ENCODE measurements at regions of chr6 and their contacts with region 1.

Region 1: DNA sequence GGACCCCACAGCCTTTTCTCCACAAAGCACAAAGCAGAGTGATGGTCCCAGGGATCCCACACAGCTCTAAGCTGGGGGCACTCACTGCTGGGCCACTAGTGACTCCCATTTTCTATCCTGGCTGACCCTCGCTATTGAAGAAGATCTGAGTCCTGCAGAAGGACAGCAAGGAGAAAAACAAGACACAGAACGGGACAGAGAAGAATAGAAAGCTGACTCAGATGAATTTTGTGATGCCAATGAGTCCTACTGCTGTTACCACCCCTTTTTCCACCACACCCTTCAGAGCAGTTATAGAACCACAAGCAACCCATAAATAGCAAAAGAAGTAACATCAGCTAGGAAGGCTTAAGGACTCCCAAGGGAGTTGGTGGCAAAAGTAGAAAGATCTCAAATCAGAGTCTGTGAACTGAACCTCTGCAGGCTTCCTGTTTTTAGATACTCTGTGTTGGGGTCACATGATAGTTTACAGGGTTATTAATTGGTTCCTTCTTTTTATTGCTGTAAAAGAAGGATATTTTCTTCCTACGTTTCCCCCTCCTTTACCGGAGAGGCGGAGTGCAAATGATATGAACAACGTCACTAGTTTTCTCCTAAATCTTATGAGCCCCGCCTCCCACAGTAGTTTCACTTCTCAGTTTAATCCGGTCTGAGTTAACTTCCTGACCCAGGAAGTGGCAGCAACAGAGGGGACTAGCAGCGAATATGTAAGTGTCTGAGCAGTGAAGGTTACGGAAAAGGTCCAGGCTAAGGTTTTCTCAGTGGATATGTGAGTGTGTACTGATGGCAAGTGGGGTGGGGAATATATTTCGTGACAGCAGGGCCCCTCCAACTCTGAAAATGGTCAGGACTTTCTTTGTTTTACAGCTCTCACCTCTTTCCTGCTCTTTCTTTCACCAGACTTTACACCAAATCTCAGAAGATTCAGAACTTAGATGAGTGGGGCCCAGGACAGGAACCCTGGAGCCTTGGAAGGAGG is at the start of gene TRIM38:
- DNase-seq: peak; percentile 50 to 95 (median 77)
- ATAC-seq: peak; percentile 86
- H3K4me3 ChIP-seq: peak within 1 kb of the TSS; percentile 76 to 86
- H3K4me3 Mint-ChIP-seq: peak within 1 kb of the TSS; percentile 95
- H3K27ac ChIP-seq: peak within 1 kb of the TSS; percentile 91 to 95
- H3K27ac Mint-ChIP-seq: peak within 1 kb of the TSS; percentile 98
- H3K4me1 ChIP-seq: peaks cover 64% of the 10 kb centered on the region
- H3K4me1 Mint-ChIP-seq: peaks cover 81% of the 10 kb centered on the region
- H3K27me3 ChIP-seq: no peaks in the 10 kb centered on the region
- H3K27me3 Mint-ChIP-seq: no peaks in the 10 kb centered on the region
- CTCF ChIP-seq: no peak
- total RNA-seq, gene TRIM38: 13.2 to 13.6 TPM

Region 2: DNA sequence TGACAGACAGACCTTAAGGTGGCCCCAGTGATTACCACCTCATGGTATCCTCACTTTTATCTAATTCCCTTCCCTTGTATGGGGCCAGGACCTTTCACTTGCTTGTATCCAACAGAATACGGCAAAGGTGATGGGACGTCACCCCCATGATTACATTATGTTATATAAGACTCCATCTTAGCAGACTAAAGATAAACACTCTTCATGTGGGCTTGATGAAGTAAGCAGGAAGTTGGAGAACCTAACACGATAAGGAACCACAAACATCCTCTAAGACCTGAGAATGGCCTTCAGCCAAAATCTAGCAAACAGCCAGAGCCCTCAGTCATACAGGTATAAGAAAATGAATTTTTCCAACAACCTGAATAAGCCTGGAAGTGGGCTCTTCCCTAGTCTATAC is 96.4 kb before region 1 on chr6:
- CTCF ChIA-PET with region 1: no interaction called
- POLR2A ChIA-PET with region 1: no interaction called
- intact Hi-C with region 1: loop called in 1 of 2 experiments (anchors 5 kb)
- DNase-seq: peak in 7 of 9 experiments; percentile 5 to 84 (median 47)
- ATAC-seq: peak; percentile 91
- H3K4me3 ChIP-seq: no peak overlapping the region
- H3K4me3 Mint-ChIP-seq: peak overlapping the region; percentile 40
- H3K27ac ChIP-seq: peak overlapping the region in 1 of 2 experiments; percentile 38
- H3K27ac Mint-ChIP-seq: peak overlapping the region; percentile 88
- H3K4me1 ChIP-seq: peaks cover 14% of the 10 kb centered on the region
- H3K4me1 Mint-ChIP-seq: peaks cover 24% of the 10 kb centered on the region
- H3K27me3 ChIP-seq: no peaks in the 10 kb centered on the region
- H3K27me3 Mint-ChIP-seq: no peaks in the 10 kb centered on the region
- CTCF ChIP-seq: no peak

Region 3: GRCh38 chr6:26020329-26021000 is 58.0 kb after region 1 on chr6:
- CTCF ChIA-PET with region 1: interaction called, 5 read pairs
- POLR2A ChIA-PET with region 1: interaction called, 15 read pairs
- intact Hi-C with region 1: loop called in 1 of 2 experiments (anchors 2 kb)
- DNase-seq: peak; percentile 69 to 95 (median 78)
- ATAC-seq: peak; percentile 47
- H3K4me3 ChIP-seq: peak overlapping the region; percentile 85 to 88
- H3K4me3 Mint-ChIP-seq: peak overlapping the region; percentile 88
- H3K27ac ChIP-seq: peak overlapping the region; percentile 95 to 98
- H3K27ac Mint-ChIP-seq: peak overlapping the region; percentile 99
- H3K4me1 ChIP-seq: peaks cover 10% of the 10 kb centered on the region
- H3K4me1 Mint-ChIP-seq: peaks cover 41% of the 10 kb centered on the region
- H3K27me3 ChIP-seq: no peaks in the 10 kb centered on the region
- H3K27me3 Mint-ChIP-seq: no peaks in the 10 kb centered on the region
- CTCF ChIP-seq: no peak

Measured in CD8-positive, alpha-beta T cell (primary cell).